ENCODE measurements at regions of chr10 and their contacts with region 1.

Region 1: DNA sequence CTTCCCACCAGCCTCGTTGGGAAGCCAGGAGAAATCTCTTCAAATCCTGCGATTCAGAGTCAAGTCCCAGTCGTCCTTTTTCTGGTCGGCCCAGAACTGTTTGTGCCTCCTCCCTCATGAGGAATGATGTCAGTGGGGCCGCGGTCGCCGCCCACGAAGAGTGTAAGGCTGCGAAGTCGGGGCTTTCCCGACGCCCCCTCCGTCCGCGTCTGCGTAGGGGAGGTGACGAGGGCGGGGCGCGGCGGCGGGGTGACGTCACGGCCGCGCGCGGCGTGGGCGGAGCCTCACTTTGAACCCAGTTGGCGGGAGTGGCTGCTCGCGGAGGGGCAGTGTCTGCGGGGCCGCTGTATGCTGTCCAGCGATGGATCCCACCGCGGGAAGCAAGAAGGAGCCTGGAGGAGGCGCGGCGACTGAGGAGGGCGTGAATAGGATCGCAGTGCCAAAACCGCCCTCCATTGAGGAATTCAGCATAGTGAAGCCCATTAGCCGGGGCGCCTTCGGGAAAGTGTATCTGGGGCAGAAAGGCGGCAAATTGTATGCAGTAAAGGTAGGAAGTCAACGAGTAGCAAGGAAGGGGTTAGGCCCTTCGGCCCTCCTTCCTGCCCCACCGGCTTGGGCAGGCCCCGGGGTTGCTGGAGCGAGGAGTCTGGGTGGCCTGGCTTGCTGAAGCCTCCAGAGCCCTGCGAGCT is at the start of gene MASTL:
- DNase-seq: peak; percentile 44 to 91
- H3K4me3 ChIP-seq: peak within 1 kb of the TSS; percentile 95 to 100 (median 98)
- H3K27ac ChIP-seq: peak within 1 kb of the TSS; percentile 96
- H3K4me1 ChIP-seq: peaks cover 0 to 3% (median 0%) of the 10 kb centered on the region in 4 experiments; a peak in 4 of 7 replicates
- H3K27me3 ChIP-seq: no peaks in the 10 kb centered on the region
- CTCF ChIP-seq: no peak
- EP300 ChIP-seq: no peak
- POLR2A ChIP-seq: peak in 1 of 2 experiments; percentile 79; a peak in 2 of 3 replicates
- RAD21 ChIP-seq: no peak
- total RNA-seq, gene MASTL: 40.6 and 42.5 TPM in 2 replicates

Region 2: DNA sequence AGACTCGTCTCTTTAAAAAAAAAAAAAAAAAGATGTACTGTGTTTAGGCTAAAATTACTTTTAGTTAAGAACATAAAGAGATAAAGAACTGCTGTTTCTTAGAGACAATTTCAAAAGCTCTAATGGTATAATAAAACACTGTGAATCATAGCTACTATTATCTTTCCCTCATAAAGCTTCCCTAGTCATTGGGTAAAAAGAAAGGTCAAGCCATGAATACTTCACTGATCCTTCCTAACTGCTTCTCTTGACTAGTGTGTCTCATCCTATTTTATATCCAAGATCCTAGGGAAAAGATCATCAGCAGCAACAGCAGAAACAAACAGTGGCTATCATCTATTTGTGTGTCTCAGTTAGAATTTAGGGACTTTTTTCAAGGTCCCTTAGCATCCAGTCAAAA is 11.5 kb before region 1 on chr10:
- CTCF ChIA-PET with region 1: interaction called, 5 read pairs
- POLR2A ChIA-PET with region 1: interaction called, 48 read pairs
- DNase-seq: no peak
- H3K4me3 ChIP-seq: no peak overlapping the region
- H3K27ac ChIP-seq: no peak overlapping the region
- H3K4me1 ChIP-seq: peaks cover 0 to 2% (median 0%) of the 10 kb centered on the region in 4 experiments; a peak in 1 of 7 replicates
- H3K27me3 ChIP-seq: no peaks in the 10 kb centered on the region
- CTCF ChIP-seq: no peak
- EP300 ChIP-seq: no peak
- POLR2A ChIP-seq: no peak
- RAD21 ChIP-seq: no peak